AG04449 (cell line): ENCODE measurements at regions of chr4 and their contacts with region 1.

Region 1: DNA sequence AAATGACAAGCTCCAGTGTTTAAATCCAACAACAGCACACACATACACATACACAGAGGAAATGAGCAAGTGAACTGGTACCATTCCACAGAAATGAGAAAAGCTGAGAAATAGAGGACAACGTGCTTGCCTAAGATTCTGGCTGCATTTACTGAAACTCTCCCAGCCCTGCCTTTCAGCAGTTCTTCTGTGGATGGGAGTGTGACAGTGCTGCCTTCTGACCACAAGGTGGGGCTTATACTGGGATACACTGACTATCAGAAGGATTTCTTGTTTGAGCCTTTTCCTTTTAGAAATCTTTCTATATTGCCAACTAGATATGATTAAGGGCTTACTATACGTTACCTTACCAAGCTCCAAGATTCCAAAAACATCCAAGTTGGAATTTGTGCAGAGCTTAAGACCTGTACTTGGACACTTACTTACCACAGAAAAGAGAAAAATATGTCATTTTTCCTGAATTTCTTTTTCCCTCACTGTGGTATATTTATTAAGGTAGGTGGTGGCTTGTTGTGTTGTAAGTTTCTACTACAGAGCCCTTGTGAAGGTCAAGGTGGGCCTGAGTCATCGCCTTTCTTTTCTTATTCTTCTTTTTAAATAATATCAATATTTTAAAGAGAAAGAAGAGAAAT is 10.7 kb upstream of the CXCL8 start:
- DNase-seq: peak; percentile 63
- H3K4me3 ChIP-seq: no peak overlapping the region
- CTCF ChIP-seq: peak; percentile 84

Region 2: DNA sequence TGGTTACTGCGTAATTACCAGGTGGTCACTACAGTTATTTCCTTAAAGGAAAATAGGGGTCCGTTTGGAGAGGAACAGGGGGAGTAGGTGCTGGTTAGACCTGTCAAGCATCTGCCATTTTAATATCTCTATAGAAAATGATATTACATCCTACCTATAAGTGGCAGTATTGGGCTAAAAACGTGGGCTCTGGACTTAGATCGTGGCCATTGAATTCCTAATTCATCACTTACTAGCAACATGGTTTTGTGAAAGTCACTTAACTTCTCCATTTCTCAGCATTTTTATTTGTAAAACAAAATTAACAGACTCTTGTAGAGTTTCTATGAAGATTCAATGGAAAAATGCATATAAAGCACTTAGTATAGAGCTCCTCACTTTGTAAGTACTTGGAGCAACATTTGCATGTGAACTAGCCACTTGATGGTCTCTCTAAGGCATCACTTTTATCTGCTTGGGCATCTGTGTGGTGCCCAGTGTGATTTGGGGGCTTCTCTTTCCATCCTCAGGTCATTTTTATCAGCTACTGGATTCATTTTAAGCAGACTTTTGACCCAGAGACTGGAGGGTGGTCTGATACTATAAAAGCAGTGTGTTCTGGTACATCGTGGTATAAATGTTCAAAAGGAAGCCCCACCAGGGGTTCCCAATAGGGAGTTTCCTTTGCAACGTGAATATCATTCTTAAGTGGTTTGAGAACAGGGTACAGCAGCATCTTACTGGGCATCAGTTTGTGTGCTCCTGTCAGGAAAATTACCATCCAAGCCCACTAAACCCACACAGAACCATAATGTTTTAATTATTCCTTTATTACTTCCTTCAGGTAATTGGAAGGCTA is 66.7 kb before region 1 on chr4:
- CTCF ChIA-PET with region 1: interaction called, 25 read pairs
- POLR2A ChIA-PET with region 1: no interaction called
- DNase-seq: no peak
- H3K4me3 ChIP-seq: no peak overlapping the region
- CTCF ChIP-seq: peak; percentile 44

Region 3: DNA sequence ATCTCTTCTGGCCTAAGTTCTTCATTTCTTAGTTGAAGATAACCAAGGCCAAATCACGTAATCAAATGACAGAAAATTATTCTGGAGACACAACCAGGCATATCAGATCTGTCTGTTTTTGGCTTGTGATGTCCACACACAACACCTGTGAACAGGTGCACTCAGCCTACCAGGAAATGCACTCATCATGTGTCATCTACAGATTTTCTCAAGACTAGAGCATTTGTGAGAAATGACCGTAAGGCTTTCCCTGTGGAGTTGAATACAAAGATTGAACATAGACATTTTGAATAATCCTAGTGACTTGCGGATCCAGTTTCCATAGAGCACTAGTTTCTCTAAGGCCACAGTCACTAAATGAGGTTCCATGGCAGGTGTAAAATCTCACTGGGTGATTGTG is 16.0 kb before region 1 on chr4:
- CTCF ChIA-PET with region 1: interaction called, 30 read pairs
- POLR2A ChIA-PET with region 1: no interaction called
- DNase-seq: no peak
- H3K4me3 ChIP-seq: no peak overlapping the region
- CTCF ChIP-seq: no peak

Region 4: GRCh38 chr4:73740353-73740778 is 10.7 kb after region 1 on chr4 and contains the start of gene CXCL8:
- CTCF ChIA-PET with region 1: interaction called, 40 read pairs
- POLR2A ChIA-PET with region 1: interaction called, 4 read pairs
- DNase-seq: no peak
- H3K4me3 ChIP-seq: no peak within 1 kb of the TSS
- CTCF ChIP-seq: no peak

Region 5: GRCh38 chr4:73901031-73901430 is 171.4 kb after region 1 on chr4:
- CTCF ChIA-PET with region 1: interaction called, 13 read pairs
- POLR2A ChIA-PET with region 1: no interaction called
- DNase-seq: no peak
- H3K4me3 ChIP-seq: no peak overlapping the region
- CTCF ChIP-seq: no peak

Region 6: DNA sequence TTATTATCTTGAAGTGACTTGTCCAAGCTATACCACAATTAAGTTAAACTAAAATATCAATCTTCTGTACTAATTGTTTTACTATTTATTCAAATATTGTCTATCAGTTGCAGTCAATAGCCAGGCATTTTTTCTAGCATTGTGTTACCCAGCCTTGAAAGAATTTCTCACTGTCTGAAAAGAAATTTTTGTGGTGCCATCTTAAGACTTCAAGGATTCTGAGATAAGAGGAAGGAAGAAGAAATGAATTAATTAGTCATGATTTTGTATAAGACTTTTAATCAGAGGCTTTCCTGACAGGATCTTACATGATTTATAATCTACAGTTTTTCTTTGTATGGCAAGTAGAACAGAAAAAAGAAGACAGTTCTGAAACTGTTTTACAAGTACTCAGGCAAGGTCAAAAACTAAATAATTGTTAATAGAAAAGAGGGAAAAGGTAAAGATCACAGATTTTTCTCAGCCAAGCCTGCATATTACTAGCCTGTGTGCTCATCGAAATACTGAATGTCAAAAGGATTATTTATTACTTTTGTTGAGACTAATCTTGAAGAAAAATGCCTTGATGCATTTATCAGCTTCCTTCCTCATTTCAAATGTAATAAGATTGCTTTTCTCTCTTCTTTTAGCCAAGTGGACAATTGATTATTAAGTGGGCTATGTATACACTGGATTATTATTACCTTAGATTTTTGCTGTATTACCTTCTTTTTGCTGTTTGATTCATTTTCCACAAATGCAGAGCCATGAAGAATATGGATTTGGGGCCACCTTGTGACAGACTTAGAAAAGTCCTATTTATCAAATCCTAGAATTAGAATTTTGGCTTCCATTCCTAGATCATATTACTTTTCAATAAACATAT is 193.3 kb after region 1 on chr4:
- CTCF ChIA-PET with region 1: interaction called, 34 read pairs
- POLR2A ChIA-PET with region 1: no interaction called
- DNase-seq: no peak
- H3K4me3 ChIP-seq: no peak overlapping the region
- CTCF ChIP-seq: peak; percentile 21

Region 7: DNA sequence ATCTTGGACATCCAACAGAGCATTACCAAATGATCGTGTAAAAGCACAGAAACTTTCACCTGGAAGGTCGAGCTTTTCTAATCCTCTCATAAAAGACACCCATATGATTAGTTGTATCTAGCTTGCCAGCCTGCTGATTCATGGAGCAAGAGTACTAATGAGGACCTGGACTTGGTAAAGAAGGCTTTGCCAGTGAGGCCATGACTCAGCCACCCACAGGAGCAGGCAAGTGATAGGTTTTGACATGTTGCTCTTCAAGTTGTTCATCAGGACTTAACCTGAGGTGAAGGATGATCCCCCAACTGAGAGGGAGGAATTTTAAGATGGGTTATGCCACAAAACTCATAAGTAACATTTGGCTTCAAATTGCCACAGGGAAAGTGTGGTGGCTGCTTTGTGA is 554.0 kb after region 1 on chr4:
- CTCF ChIA-PET with region 1: no interaction called
- POLR2A ChIA-PET with region 1: no interaction called
- DNase-seq: peak; percentile 47
- H3K4me3 ChIP-seq: no peak overlapping the region
- CTCF ChIP-seq: no peak